ENCODE measurements at regions of chr1 and their contacts with region 1.

Region 1: DNA sequence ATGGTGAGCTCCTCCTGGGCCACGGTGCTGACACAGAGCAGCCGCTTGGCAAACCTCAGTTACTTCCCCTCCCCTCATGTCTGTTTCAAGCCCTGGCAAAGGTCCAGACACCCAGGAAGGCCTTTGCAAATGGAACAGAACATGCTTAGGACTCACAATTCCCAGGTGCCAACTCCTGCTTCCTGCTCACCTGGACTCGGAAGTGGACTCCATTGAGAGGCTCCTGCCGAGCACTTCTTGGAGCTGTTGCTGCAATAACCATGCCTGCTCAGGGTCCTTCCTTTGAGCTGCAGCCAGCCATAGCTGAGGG is 10.7 kb downstream of the DCST2 start:
- DNase-seq: peak; percentile 85
- H3K4me3 Mint-ChIP-seq: peak overlapping the region; percentile 3
- H3K27ac Mint-ChIP-seq: peak overlapping the region; percentile 52
- H3K4me1 Mint-ChIP-seq: peaks cover 63% of the 10 kb centered on the region
- H3K27me3 Mint-ChIP-seq: no peaks in the 10 kb centered on the region
- CTCF ChIP-seq: no peak

Region 2: GRCh38 chr1:154695985-154696384 is 326.9 kb before region 1 on chr1:
- CTCF ChIA-PET with region 1: no interaction called
- POLR2A ChIA-PET with region 1: no interaction called
- intact Hi-C with region 1: no loop called
- DNase-seq: peak; percentile 16
- H3K4me3 Mint-ChIP-seq: no peak overlapping the region
- H3K27ac Mint-ChIP-seq: no peak overlapping the region
- H3K4me1 Mint-ChIP-seq: no peaks in the 10 kb centered on the region
- H3K27me3 Mint-ChIP-seq: peaks cover 64% of the 10 kb centered on the region
- CTCF ChIP-seq: no peak

Region 3: DNA sequence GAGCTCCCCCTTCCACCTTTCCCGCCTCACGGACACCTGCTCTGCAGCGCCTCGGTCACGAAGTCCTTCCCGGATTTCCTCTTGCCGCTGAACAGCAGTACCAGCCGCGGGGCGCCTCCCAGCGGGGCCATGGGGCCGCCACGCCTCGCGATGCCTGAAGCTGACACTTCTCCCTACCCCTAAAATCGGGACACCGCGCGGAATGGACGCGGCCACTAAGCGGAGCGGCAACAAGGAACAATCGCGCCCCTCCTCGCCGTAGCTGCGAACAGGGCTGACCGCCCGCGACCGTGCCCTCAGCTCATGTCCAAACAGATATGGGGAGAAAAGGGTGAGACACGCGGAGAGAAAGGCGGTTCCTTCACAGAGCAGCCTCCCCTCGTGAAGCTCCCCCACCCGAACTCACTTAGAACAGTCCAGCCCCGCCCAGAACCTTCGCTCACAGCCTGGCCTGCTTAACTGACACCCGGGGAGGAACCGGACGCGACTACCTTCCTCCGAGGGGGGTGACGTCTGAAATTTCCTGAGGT is 86.3 kb before region 1 on chr1 and contains the start of gene PMVK:
- CTCF ChIA-PET with region 1: interaction called, 3 read pairs
- POLR2A ChIA-PET with region 1: interaction called, 21 read pairs
- intact Hi-C with region 1: no loop called
- DNase-seq: peak; percentile 99
- H3K4me3 Mint-ChIP-seq: peak within 1 kb of the TSS; percentile 90
- H3K27ac Mint-ChIP-seq: peak within 1 kb of the TSS; percentile 100
- H3K4me1 Mint-ChIP-seq: peaks cover 49% of the 10 kb centered on the region
- H3K27me3 Mint-ChIP-seq: no peaks in the 10 kb centered on the region
- CTCF ChIP-seq: peak; percentile 26
- total RNA-seq, gene PMVK: 57.7 and 68.9 TPM in 2 replicates

Region 4: DNA sequence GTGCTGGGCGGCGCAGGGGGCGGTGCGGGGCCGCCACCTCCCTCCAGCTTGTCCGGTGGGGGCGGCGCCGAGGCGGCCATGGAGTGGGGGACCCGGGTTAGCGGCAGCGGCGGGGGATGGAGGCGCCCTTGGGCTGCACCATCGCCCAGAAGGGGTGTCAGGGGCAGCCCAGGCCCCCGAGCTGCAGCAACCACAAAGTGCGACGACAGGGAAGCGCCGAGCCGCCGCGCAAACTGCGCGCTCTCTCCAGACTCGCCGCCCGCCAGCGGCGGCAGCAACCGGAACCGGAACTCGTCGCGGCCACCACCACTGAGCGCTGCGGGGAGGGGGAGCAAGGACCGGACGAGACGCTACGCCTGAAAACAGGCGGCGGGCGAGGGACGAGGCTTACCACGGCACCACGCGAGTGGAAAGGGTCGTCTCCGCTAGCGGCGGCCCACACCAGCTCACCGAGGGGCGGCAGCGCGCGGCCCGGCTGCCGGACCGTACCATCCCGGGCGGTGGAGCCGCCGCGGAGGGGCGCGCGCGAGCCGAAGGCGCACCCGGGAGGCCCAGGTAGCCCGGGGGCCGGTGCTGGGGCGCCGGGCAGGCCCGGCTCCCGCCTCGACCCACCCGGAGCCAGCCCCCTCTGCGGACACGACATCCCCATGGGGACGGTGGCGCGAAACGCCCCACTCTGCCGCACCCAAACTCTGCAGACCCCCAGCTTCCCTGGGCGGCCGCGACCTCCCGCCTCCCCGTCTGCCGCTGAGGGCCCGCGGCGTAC is 61.2 kb before region 1 on chr1 and contains the start of gene PYGO2:
- CTCF ChIA-PET with region 1: interaction called, 9 read pairs
- POLR2A ChIA-PET with region 1: interaction called, 45 read pairs
- intact Hi-C with region 1: no loop called
- DNase-seq: peak; percentile 85
- H3K4me3 Mint-ChIP-seq: peak within 1 kb of the TSS; percentile 73
- H3K27ac Mint-ChIP-seq: peak within 1 kb of the TSS; percentile 33
- H3K4me1 Mint-ChIP-seq: peaks cover 39% of the 10 kb centered on the region
- H3K27me3 Mint-ChIP-seq: no peaks in the 10 kb centered on the region
- CTCF ChIP-seq: peak; percentile 81
- total RNA-seq, gene PYGO2: 32.1 and 35.9 TPM in 2 replicates

Region 5: GRCh38 chr1:154982897-154983648 is 39.8 kb before region 1 on chr1 and contains the start of gene FLAD1:
- CTCF ChIA-PET with region 1: interaction called, 10 read pairs
- POLR2A ChIA-PET with region 1: interaction called, 312 read pairs
- intact Hi-C with region 1: no loop called
- DNase-seq: peak; percentile 100
- H3K4me3 Mint-ChIP-seq: no peak within 1 kb of the TSS
- H3K27ac Mint-ChIP-seq: no peak within 1 kb of the TSS
- H3K4me1 Mint-ChIP-seq: peaks cover 6% of the 10 kb centered on the region
- H3K27me3 Mint-ChIP-seq: no peaks in the 10 kb centered on the region
- CTCF ChIP-seq: no peak
- total RNA-seq, gene FLAD1: 65.4 and 91.1 TPM in 2 replicates

Region 6: GRCh38 chr1:155012026-155012546 is 10.8 kb before region 1 on chr1:
- CTCF ChIA-PET with region 1: interaction called, 10 read pairs
- POLR2A ChIA-PET with region 1: interaction called, 283 read pairs
- intact Hi-C with region 1: no loop called
- DNase-seq: peak; percentile 95
- H3K4me3 Mint-ChIP-seq: peak overlapping the region; percentile 70
- H3K27ac Mint-ChIP-seq: peak overlapping the region; percentile 86
- H3K4me1 Mint-ChIP-seq: peaks cover 76% of the 10 kb centered on the region
- H3K27me3 Mint-ChIP-seq: no peaks in the 10 kb centered on the region
- CTCF ChIP-seq: no peak

Region 7: DNA sequence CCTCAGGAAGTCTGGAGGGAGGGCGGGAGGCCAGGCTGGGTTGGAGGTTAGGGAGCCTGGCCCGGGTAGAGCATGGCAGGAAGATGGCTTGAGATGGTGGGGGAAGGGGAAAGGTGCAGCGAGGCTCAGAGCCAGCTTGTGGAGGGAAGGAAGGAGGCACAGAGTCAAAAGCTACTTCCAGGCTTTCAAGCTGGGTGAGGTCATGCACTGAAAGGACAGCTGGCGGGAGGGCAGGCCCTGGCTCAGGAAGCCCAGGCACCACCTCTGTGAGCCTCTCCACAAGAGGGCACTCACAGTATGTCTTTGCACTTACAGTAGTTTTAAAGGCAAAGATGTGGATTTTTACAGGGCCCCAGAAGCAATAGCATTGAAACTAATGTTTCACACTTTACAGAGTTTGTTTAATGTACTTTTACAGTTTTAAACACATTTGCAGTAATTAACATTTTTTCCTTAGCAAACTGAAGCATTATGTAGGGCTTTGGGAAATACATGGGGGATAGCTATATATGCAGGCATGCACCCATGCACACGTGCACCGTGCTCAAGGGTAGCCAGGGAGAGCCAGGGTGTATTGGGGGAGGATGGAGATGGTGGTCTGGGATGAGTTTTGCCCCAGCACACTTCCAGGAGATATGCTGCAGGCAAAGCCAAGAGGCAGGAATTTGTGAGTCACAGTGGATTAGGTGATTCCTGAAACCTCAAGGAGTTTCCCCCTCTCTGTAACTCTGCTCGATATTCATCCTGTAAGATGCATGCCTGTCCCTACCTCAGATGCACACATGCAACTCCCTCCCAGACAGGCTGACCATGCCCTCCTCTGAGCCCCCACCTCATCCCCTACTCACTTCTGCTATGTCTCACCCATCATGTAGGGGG is 22.2 kb after region 1 on chr1:
- CTCF ChIA-PET with region 1: interaction called, 390 read pairs
- POLR2A ChIA-PET with region 1: interaction called, 56 read pairs
- intact Hi-C with region 1: no loop called
- DNase-seq: peak; percentile 90
- H3K4me3 Mint-ChIP-seq: no peak overlapping the region
- H3K27ac Mint-ChIP-seq: no peak overlapping the region
- H3K4me1 Mint-ChIP-seq: peaks cover 37% of the 10 kb centered on the region
- H3K27me3 Mint-ChIP-seq: no peaks in the 10 kb centered on the region
- CTCF ChIP-seq: peak; percentile 83

Region 8: DNA sequence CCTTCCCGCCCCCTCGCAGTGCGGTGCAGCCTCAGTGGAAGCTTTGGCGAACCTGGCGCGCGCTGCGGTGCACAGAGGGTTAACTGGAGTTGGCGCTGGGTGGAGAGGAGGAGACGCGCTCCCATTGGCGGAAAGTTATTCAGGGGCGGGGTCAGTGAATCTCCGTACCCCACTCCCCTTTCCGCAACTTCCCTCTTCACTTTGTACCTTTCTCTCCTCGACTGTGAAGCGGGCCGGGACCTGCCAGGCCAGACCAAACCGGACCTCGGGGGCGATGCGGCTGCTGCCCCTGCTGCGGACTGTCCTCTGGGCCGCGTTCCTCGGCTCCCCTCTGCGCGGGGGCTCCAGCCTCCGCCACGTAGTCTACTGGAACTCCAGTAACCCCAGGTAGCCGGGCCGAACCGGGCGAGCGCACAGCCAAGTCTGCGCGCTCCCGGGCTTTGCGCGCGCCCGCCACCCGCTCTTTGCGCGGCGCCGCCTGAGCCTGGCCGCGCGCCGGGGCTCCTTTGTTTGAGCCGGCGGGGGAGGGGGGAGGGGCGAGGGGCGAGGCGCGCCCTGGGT is 40.7 kb after region 1 on chr1 and contains the start of gene EFNA4:
- CTCF ChIA-PET with region 1: interaction called, 390 read pairs
- POLR2A ChIA-PET with region 1: interaction called, 8 read pairs
- intact Hi-C with region 1: no loop called
- DNase-seq: peak; percentile 96
- H3K4me3 Mint-ChIP-seq: peak within 1 kb of the TSS; percentile 81
- H3K27ac Mint-ChIP-seq: peak within 1 kb of the TSS; percentile 3
- H3K4me1 Mint-ChIP-seq: peaks cover 31% of the 10 kb centered on the region
- H3K27me3 Mint-ChIP-seq: no peaks in the 10 kb centered on the region
- CTCF ChIP-seq: no peak
- total RNA-seq, gene EFNA4: 7.4 and 9.5 TPM in 2 replicates

Region 9: GRCh38 chr1:155261852-155262673 is 239.2 kb after region 1 on chr1 and contains the start of gene SCAMP3:
- CTCF ChIA-PET with region 1: no interaction called
- POLR2A ChIA-PET with region 1: no interaction called
- intact Hi-C with region 1: no loop called
- DNase-seq: peak; percentile 100
- H3K4me3 Mint-ChIP-seq: peak within 1 kb of the TSS; percentile 98
- H3K27ac Mint-ChIP-seq: peak within 1 kb of the TSS; percentile 96
- H3K4me1 Mint-ChIP-seq: peaks cover 18% of the 10 kb centered on the region
- H3K27me3 Mint-ChIP-seq: no peaks in the 10 kb centered on the region
- CTCF ChIP-seq: no peak
- total RNA-seq, gene SCAMP3: 80.6 and 88.1 TPM in 2 replicates

Measured in MCF 10A (cell line).